ENCODE measurements at regions of chr1 and their contacts with region 1.

Region 1: GRCh38 chr1:63674238-63674864 is 81.1 kb downstream of the PGM1 start:
- DNase-seq: peak; percentile 74
- H3K4me3 ChIP-seq: no peak overlapping the region
- H3K27ac ChIP-seq: no peak overlapping the region
- H3K4me1 ChIP-seq: no peaks in the 10 kb centered on the region
- H3K27me3 ChIP-seq: peaks cover 0 to 2% of the 10 kb centered on the region in 2 experiments
- CTCF ChIP-seq: peak; percentile 74 to 83
- POLR2A ChIP-seq: no peak

Region 2: DNA sequence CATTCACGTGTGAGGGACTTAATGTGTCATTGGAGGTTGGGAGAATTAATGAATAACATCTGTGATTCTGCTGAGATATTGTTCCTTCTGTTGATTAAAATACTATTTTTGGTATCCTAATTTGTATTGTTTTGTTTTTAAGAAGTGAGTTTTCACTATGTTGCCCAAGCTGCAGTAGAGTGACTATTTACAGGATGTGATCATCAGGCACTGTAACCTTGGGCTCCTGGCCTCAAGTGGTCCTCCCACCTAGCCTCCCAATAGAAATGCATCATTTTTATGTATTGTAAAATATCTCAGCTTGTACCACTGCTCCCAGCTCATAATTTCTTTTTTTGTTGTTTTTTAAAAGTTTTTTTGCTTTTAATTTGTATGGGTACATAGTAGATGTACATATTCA is 292.6 kb before region 1 on chr1:
- CTCF ChIA-PET with region 1: no interaction called
- POLR2A ChIA-PET with region 1: no interaction called
- dilution Hi-C with region 1: no loop called
- intact Hi-C with region 1: no loop called
- DNase-seq: no peak
- H3K4me3 ChIP-seq: no peak overlapping the region
- H3K27ac ChIP-seq: no peak overlapping the region
- H3K4me1 ChIP-seq: no peaks in the 10 kb centered on the region
- H3K27me3 ChIP-seq: no peaks in the 10 kb centered on the region
- CTCF ChIP-seq: no peak
- POLR2A ChIP-seq: no peak

Region 3: GRCh38 chr1:63615768-63616420 is 58.5 kb before region 1 on chr1:
- CTCF ChIA-PET with region 1: interaction called, 10 read pairs
- POLR2A ChIA-PET with region 1: no interaction called
- dilution Hi-C with region 1: no loop called
- intact Hi-C with region 1: loop called (anchors 1 kb)
- DNase-seq: peak; percentile 82
- H3K4me3 ChIP-seq: no peak overlapping the region
- H3K27ac ChIP-seq: no peak overlapping the region
- H3K4me1 ChIP-seq: no peaks in the 10 kb centered on the region
- H3K27me3 ChIP-seq: no peaks in the 10 kb centered on the region
- CTCF ChIP-seq: peak; percentile 50 to 59
- POLR2A ChIP-seq: no peak

Region 4: GRCh38 chr1:64163970-64164369 is 489.6 kb after region 1 on chr1:
- CTCF ChIA-PET with region 1: interaction called, 18 read pairs
- POLR2A ChIA-PET with region 1: no interaction called
- dilution Hi-C with region 1: no loop called
- intact Hi-C with region 1: no loop called
- DNase-seq: peak; percentile 6
- H3K4me3 ChIP-seq: no peak overlapping the region
- H3K27ac ChIP-seq: no peak overlapping the region
- H3K4me1 ChIP-seq: no peaks in the 10 kb centered on the region
- H3K27me3 ChIP-seq: no peaks in the 10 kb centered on the region
- CTCF ChIP-seq: peak in 1 of 2 donors; percentile 9
- POLR2A ChIP-seq: no peak

Measured in endothelial cell of umbilical vein (primary cell).